H1 (cell line): ENCODE measurements at regions of chr4 and their contacts with region 1.

Region 1: DNA sequence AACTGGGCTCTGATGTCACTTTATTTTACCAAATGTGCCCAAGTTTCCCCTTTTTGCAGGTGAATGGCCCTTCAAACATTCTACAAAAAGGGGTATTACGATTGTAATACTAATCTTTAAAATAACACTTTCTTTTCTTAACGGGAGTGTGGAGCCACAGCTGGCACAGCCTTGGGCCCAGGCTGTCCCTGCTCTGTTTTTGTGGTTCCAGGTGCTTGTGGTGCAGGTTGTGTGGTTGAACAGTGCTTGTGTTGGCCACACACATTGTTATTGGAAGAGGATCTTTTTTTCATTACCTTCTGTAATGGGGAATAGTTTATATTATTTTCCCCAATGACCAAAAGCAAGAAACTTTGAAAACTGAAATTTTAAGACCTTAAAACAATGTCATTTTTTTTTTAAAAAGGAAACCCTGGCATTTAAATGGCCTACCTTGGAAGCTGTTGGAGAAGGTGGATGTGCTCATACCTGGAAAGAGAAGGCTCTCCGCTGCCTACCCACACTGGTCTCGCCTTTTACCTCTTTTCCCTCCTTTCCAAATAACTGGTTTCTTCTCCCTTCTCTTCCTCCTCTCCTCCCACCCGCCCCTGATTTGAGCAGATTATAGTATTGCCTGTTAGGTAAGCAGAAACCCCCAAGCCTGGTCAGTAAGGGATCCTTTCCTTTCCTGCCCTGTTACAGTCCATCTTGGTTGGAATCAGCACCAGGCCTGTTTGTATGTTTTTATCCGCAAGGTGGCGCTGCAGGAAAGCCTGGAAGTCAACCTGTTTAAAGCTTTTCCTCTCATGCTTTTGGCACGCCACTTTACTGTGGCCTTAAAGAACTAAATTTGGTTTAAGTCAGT is 28.6 kb downstream of the HADH start:
- DNase-seq: peak; percentile 19 to 91
- H3K4me3 ChIP-seq: no peak overlapping the region
- H3K27ac ChIP-seq: no peak overlapping the region
- H3K4me1 ChIP-seq: no peaks in the 10 kb centered on the region
- H3K27me3 ChIP-seq: no peaks in the 10 kb centered on the region
- CTCF ChIP-seq: peak; percentile 57 to 87 (median 75)
- EP300 ChIP-seq: no peak
- POLR2A ChIP-seq: no peak
- RAD21 ChIP-seq: peak; percentile 84 to 87

Region 2: DNA sequence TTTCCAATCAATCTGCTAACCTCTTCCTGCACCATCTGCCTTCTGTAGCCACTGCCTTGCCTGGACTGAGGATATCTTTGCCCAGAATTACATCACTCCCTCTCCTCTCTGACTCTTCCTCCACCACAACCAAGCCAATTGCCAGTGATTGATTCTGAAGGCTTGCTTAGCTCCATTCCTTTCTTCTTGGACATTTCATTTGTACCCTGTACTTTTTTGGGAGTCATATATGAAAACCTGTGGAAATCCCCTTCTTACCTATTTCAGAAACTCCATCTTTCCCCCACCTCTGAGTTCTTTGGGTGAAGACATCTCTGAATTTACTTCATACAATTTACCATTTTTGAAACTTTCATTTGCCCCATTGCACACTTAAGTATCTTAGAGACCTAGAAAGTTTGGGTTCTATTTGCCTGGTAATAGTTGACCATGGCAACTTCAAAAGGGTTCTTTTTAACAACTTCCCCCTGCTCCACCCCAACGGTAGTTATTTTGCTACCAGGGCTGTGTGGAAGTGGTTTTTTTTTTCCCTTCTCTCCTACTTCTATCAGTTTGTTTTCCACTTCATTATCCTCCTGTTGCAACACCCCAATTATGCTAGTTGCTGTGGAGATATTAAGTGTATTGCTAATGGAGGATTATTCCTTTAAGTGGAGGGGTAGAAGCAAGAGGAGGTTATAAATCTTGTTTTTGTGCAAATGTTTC is 179.2 kb before region 1 on chr4:
- CTCF ChIA-PET with region 1: no interaction called
- POLR2A ChIA-PET with region 1: no interaction called
- DNase-seq: no peak
- H3K4me3 ChIP-seq: no peak overlapping the region
- H3K27ac ChIP-seq: no peak overlapping the region
- H3K4me1 ChIP-seq: no peaks in the 10 kb centered on the region
- H3K27me3 ChIP-seq: no peaks in the 10 kb centered on the region
- CTCF ChIP-seq: no peak
- EP300 ChIP-seq: no peak
- POLR2A ChIP-seq: no peak
- RAD21 ChIP-seq: no peak

Region 3: DNA sequence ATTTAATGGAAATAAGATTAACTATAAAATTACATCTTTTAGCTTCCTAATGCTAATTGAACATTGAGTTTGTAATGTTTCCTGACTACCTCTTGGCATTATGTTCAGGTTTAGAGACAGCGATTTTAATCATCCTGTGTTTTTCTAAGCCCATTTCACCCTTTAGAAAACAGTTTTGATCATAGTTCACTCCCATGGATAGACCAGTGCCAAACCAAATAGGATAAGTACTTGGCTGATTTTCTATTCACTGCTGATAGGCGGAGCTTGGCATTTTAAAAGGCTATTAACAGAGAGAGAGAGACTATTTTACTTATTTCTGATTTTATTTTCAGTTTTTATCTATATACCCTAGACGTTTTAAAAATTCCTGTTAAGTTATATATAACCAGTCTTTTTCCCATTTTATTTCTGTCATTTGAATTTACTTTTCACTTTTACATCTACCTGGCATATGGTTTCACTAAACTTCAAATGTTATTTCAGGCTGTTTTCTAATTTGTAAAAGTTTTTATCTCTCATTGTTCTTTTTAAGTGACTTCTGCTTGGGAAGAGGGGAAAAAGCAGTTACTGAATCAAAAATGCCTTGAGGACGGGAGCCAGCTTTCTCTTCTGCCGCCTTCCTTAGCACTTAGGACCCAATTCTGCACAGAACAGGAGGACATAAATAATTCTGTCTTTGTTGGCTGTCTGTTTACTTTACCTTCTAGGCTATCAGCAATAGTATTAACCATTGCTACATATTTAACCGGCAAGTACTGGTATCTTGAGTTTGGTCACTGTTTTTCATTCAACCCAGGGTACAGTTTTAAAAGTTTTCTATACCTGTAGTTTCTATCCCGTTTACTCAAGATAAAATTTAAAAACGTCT is 147.1 kb before region 1 on chr4:
- CTCF ChIA-PET with region 1: no interaction called
- POLR2A ChIA-PET with region 1: no interaction called
- DNase-seq: no peak
- H3K4me3 ChIP-seq: no peak overlapping the region
- H3K27ac ChIP-seq: no peak overlapping the region
- H3K4me1 ChIP-seq: no peaks in the 10 kb centered on the region
- H3K27me3 ChIP-seq: no peaks in the 10 kb centered on the region
- CTCF ChIP-seq: no peak
- EP300 ChIP-seq: no peak
- POLR2A ChIP-seq: no peak
- RAD21 ChIP-seq: no peak

Region 4: DNA sequence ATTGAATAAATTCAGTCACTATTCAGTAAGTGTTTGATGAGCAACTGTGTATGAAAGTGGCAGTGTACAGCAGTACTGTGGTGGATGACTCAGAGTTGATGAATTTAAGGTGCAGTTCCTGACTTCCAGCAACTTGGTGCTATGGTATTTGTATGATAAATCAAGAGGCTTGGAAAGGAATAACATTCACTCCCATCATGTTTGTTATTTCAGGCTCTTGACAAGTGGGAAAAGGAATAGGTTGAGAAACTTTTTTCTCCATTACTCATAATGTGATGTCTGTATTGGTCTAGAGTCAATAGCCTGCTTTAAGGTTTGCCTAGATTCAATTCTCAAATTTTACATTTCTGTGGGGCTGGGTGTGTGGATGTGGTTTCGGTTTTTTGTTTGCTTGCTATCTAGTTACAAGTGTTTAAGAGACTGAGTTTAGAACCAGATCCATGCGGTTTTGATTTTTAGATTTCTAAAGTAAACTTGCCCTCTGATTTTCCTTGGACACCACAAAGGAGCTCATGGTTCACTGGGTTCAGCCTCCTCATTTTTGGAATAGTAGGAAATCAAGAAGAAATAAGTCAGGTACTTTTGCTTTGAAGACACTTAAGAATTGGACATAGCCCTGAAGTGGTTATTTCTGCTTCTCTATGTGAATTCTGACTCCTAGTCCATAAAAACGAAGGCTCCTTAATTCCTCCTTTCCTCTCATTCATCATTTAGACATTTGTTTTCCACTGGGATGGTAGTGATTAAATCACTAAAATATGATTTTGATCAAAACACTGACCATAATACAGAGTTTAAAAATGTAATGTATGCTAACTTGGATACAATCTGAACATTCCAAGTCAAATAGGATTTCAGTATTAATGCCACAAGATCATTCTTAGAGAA is 121.9 kb before region 1 on chr4:
- CTCF ChIA-PET with region 1: no interaction called
- POLR2A ChIA-PET with region 1: no interaction called
- DNase-seq: no peak
- H3K4me3 ChIP-seq: no peak overlapping the region
- H3K27ac ChIP-seq: no peak overlapping the region
- H3K4me1 ChIP-seq: no peaks in the 10 kb centered on the region
- H3K27me3 ChIP-seq: no peaks in the 10 kb centered on the region
- CTCF ChIP-seq: no peak
- EP300 ChIP-seq: no peak
- POLR2A ChIP-seq: no peak
- RAD21 ChIP-seq: no peak

Region 5: GRCh38 chr4:108001540-108002135 is 16.6 kb before region 1 on chr4:
- CTCF ChIA-PET with region 1: interaction called, 11 read pairs
- POLR2A ChIA-PET with region 1: no interaction called
- DNase-seq: no peak
- H3K4me3 ChIP-seq: no peak overlapping the region
- H3K27ac ChIP-seq: no peak overlapping the region
- H3K4me1 ChIP-seq: peaks cover 0 to 11% (median 2%) of the 10 kb centered on the region in 4 experiments; a peak in 2 of 7 replicates
- H3K27me3 ChIP-seq: no peaks in the 10 kb centered on the region
- CTCF ChIP-seq: no peak
- EP300 ChIP-seq: no peak
- POLR2A ChIP-seq: no peak
- RAD21 ChIP-seq: no peak

Region 6: DNA sequence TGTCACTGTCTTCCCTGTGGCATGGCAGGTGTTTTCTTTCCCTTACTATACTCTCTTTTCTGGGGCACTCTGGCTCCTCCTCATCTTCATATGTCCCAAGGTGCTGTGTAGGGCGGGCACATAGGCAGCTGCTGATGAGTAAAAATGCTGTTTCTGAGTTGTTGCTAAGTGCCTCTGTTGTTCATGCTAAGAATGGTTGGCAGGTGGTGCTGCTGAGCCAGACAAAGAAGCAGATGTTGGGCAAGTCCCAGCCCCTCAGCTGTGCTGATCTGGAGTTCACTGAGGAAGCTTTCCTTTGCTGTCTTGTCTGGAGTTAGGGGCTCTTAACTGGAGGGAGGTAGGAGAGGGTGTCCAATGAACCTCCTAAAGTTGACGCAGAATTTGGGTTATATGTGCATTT is 12.1 kb after region 1 on chr4:
- CTCF ChIA-PET with region 1: interaction called, 119 read pairs
- POLR2A ChIA-PET with region 1: interaction called, 3 read pairs
- DNase-seq: peak in 1 of 2 experiments; percentile 25
- H3K4me3 ChIP-seq: no peak overlapping the region
- H3K27ac ChIP-seq: no peak overlapping the region
- H3K4me1 ChIP-seq: no peaks in the 10 kb centered on the region
- H3K27me3 ChIP-seq: no peaks in the 10 kb centered on the region
- CTCF ChIP-seq: peak; percentile 39 to 77 (median 66)
- EP300 ChIP-seq: 0 out of 3 replicates have a peak, but pooled peaks of 1 of the 2 experiments have one; percentile 5
- POLR2A ChIP-seq: no peak
- RAD21 ChIP-seq: peak; percentile 84 to 88

Region 7: DNA sequence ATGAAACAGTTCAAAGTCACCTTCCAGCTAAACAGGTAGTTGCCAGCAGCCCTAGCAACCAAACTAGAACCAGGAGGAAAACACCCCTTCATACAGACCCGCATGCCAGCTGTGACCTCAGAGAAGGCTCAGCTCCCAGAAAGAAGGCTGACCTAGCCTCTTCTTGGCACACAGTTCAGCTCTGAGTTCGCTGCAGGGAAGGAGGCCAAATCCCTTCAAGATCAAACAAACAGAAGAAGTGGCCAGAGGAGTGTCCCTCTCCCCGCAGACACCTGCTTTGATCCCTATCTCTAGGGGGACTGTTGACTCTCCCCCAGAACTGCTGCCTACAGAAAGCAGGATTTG is 27.4 kb after region 1 on chr4:
- CTCF ChIA-PET with region 1: interaction called, 20 read pairs
- POLR2A ChIA-PET with region 1: no interaction called
- DNase-seq: no peak
- H3K4me3 ChIP-seq: no peak overlapping the region
- H3K27ac ChIP-seq: no peak overlapping the region
- H3K4me1 ChIP-seq: peaks cover 0 to 2% (median 2%) of the 10 kb centered on the region in 4 experiments; a peak in 3 of 7 replicates
- H3K27me3 ChIP-seq: 0 out of 7 replicates have a peak, but pooled peaks cover 0 to 2% (median 0%) of the 10 kb centered on the region in 4 experiments
- CTCF ChIP-seq: no peak
- EP300 ChIP-seq: no peak
- POLR2A ChIP-seq: no peak
- RAD21 ChIP-seq: no peak

Region 8: DNA sequence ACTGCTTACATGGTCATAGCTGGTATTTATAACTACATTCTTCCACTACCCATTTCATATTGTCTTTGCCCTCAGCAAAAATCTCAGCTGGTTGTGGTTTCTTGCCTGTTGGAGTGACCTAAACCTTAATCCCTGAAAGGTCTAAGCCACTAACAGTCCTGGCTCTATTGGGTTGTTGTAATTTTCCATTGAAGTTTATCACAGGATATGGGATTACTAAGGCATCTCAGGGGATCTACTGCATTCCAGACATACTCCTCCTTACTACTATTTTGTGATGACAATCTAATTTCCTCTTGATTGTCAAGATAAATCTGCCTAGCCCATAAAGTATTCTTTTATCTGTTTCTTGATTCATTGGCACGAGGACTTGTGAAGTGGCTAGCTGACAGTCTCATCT is 626.0 kb after region 1 on chr4:
- CTCF ChIA-PET with region 1: no interaction called
- POLR2A ChIA-PET with region 1: no interaction called
- DNase-seq: no peak
- H3K4me3 ChIP-seq: no peak overlapping the region
- H3K27ac ChIP-seq: no peak overlapping the region
- H3K4me1 ChIP-seq: no peaks in the 10 kb centered on the region
- H3K27me3 ChIP-seq: no peaks in the 10 kb centered on the region
- CTCF ChIP-seq: no peak
- EP300 ChIP-seq: no peak
- POLR2A ChIP-seq: no peak
- RAD21 ChIP-seq: no peak